ENCODE measurements at regions of chr12 and their contacts with region 1.

Region 1: GRCh38 chr12:15200641-15201040 is 20.6 kb downstream of the RERG start:
- DNase-seq: no peak
- H3K4me3 ChIP-seq: no peak overlapping the region
- H3K27ac ChIP-seq: peak overlapping the region; percentile 68 to 69
- H3K4me1 ChIP-seq: peaks cover 7 to 52% of the 10 kb centered on the region in 2 donors
- H3K27me3 ChIP-seq: no peaks in the 10 kb centered on the region
- CTCF ChIP-seq: no peak

Region 2: GRCh38 chr12:15165012-15165659 is 35.5 kb before region 1 on chr12:
- intact Hi-C with region 1: loop called (anchors 2 kb)
- DNase-seq: peak in 1 of 2 donors; percentile 87
- H3K4me3 ChIP-seq: peak overlapping the region; percentile 7 to 26
- H3K27ac ChIP-seq: peak overlapping the region; percentile 78 to 88
- H3K4me1 ChIP-seq: peaks cover 12 to 51% of the 10 kb centered on the region in 2 donors
- H3K27me3 ChIP-seq: no peaks in the 10 kb centered on the region
- CTCF ChIP-seq: no peak

Region 3: DNA sequence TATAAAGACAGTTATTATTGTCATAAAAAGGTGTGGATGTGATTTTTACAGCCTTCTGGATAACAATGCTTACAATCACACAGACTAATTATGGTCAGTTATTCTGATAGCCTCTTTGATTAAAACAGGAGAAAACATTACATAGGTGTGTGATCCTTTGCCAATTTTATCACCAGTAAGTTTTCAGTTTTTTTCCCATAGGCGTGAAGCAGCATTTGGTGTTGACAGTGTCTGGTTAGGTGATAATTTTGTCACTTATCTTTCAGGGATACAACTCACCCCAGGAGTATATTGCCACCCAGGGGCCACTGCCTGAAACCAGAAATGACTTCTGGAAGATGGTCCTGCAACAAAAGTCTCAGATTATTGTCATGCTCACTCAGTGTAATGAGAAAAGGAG is 379.8 kb after region 1 on chr12:
- intact Hi-C with region 1: no loop called
- DNase-seq: no peak
- H3K4me3 ChIP-seq: no peak overlapping the region
- H3K27ac ChIP-seq: no peak overlapping the region
- H3K4me1 ChIP-seq: no peaks in the 10 kb centered on the region
- H3K27me3 ChIP-seq: no peaks in the 10 kb centered on the region
- CTCF ChIP-seq: peak in 1 of 3 experiments; percentile 9

Measured in ascending aorta (tissue), 2 donors.